HEK293 (cell line): ENCODE measurements at regions of chr15 and their contacts with region 1.

Region 1: GRCh38 chr15:90982135-90982534 is 12.2 kb downstream of the PRC1 start:
- H3K4me3 ChIP-seq: no peak overlapping the region
- H3K27ac ChIP-seq: no peak overlapping the region
- H3K4me1 ChIP-seq: peaks cover 4% of the 10 kb centered on the region
- CTCF ChIP-seq: no peak

Region 2: DNA sequence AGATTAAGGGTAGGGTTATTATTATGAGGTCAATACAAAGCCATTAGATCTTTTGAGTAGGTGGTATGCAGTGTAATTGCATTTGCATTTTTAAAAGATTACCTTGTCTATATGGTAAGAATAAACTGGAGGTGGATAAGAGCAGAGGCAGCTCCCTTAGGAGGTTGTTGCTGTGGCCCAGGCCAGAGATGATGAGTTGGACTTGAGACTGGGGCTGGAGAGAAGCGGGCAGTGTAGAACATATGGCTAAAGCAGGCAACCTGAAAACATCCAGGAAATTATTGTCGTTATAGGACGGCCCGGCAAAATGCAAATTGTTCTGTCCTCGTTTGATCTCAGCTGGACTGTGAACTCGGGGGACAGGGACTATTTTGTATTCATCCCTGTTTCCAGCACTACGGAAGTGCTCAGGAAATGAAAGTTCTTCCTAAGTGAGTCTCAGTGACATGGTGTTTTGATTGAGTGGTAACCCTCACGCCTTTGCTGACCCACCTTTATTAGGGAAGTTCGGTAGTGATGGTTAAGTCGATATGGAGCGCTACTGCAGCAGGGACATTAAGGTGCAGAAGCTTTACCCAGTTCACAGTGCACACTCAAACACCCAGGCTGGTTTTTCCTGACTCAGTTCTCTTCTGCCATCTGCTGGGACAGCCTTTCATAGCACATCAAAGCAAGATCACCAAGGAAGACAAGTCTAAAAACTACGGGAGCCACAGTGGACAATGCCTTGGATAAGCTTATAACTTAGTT is 67.4 kb after region 1 on chr15:
- CTCF ChIA-PET with region 1: interaction called, 18 read pairs
- POLR2A ChIA-PET with region 1: no interaction called
- H3K4me3 ChIP-seq: no peak overlapping the region
- H3K27ac ChIP-seq: no peak overlapping the region
- H3K4me1 ChIP-seq: no peaks in the 10 kb centered on the region
- CTCF ChIP-seq: peak; percentile 69

Region 3: DNA sequence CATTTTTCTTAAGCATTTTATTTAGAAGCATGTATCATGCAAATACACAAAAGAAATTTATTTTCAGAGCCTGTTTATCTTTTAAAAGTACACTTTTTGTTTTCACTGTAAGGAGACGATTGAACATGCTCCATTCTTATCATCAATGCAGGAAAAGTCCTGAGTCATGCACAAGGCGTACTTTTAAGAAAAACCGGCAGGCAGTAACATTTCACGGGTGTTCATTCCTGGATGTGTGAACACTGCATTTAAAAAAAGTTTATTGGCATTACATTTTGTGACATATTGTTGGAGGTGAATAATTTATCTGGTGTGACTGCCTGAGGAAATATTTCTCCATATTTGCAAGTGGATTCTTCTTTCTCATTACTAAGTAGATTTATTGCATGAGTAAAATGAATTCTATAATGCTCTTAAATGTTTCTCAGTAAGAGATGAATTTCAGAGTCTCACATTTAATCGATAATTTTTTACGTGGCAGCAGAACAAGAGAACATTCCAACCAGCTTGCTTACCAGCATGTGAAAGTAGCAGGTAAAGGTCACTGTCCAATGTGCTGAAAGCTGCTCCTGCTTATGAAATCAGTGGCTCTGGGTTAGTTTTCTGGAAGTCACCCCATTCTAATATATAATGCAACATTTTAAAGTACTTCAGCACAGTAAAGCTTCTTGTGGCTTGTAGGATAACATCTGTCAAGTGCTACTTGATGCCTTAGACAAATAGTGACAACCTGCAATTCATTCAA is 204.9 kb after region 1 on chr15:
- CTCF ChIA-PET with region 1: no interaction called
- POLR2A ChIA-PET with region 1: no interaction called
- H3K4me3 ChIP-seq: no peak overlapping the region
- H3K27ac ChIP-seq: no peak overlapping the region
- H3K4me1 ChIP-seq: no peaks in the 10 kb centered on the region
- CTCF ChIP-seq: no peak